ENCODE measurements at regions of chr15 and their contacts with region 1.

Region 1: DNA sequence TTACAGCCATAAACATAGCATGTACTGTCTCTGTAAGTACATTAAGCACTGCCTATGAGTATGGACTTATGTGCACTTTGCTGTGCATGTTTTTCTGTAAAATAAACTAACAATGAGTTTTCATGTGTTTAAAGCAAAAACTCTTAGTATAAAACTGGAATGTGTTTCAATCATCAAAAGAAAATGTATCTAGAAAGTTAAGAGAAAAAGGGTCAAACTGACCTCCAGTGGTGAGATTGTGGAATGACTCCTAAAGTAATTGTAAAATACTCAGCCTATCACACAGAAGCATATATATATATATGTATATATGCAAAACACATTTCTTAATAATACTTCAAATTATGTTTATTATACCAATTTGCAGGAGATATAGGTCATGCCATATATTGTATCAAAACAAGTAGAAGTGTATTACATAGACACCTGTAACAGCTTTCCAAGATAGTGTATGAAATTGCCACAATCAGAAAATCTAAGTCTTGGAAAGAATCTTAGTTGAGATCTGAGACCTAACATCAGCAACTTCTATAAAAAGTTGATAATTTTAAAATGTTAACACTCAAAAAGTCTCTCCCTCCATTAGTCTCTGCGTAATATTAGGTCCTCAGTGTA is 199.6 kb downstream of the FMN1 start:
- DNase-seq: peak; percentile 70
- H3K4me3 ChIP-seq: no peak overlapping the region
- H3K27ac ChIP-seq: peak overlapping the region; percentile 26; the same call in 1 of the 2 replicates
- H3K4me1 ChIP-seq: peaks cover 13% of the 10 kb centered on the region
- H3K27me3 ChIP-seq: no peaks in the 10 kb centered on the region

Region 2: GRCh38 chr15:32651229-32651837 is 343.6 kb before region 1 on chr15:
- in situ Hi-C with region 1: loop called (anchors 5 kb)
- DNase-seq: peak; percentile 86
- H3K4me3 ChIP-seq: no peak overlapping the region
- H3K27ac ChIP-seq: no peak overlapping the region
- H3K4me1 ChIP-seq: no peaks in the 10 kb centered on the region
- H3K27me3 ChIP-seq: no peaks in the 10 kb centered on the region

Region 3: DNA sequence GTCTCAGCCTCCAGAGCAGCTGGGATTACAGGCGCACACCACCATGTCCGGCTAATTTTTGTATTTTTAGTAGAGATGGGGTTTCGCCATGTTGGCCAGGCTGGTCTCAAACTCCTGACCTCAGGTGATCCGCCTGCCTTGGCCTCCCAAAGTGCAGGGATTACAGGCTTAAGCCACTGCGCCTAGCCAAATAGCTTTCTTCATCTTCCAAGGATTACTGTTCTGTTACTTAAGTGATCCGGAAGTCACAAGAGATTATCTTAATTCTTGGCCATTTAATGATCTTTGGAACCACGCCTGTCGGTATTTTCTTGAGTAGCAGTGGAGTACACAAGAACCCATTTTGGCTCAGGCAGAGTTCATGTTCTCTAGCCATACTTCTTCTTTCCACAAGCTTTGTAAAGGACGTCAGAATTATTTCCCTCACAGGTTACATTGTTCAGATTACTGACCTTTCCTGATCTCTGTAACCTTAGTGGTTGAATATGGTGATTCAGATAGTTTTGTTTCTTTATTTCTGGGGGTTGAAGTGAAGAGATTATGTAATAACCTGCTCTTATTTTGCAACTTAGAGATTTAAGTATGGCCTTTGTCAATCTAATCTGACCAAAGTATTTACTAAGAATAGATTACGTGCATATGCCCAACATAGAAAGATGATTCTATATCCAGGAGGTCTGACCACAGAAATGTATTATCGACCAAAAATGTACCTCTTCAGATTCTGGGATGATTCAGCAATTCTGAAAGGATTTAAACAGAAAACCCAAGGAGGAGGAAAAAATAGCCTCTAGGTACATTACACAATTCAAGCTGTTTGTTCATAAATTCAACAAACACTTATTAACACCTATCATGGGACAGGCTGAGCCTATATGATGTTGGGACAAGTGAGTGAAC is 144.9 kb before region 1 on chr15:
- in situ Hi-C with region 1: loop called (anchors 5 kb)
- DNase-seq: peak; percentile 89
- H3K4me3 ChIP-seq: no peak overlapping the region
- H3K27ac ChIP-seq: peak overlapping the region; percentile 91
- H3K4me1 ChIP-seq: peaks cover 38% of the 10 kb centered on the region
- H3K27me3 ChIP-seq: no peaks in the 10 kb centered on the region

Region 4: DNA sequence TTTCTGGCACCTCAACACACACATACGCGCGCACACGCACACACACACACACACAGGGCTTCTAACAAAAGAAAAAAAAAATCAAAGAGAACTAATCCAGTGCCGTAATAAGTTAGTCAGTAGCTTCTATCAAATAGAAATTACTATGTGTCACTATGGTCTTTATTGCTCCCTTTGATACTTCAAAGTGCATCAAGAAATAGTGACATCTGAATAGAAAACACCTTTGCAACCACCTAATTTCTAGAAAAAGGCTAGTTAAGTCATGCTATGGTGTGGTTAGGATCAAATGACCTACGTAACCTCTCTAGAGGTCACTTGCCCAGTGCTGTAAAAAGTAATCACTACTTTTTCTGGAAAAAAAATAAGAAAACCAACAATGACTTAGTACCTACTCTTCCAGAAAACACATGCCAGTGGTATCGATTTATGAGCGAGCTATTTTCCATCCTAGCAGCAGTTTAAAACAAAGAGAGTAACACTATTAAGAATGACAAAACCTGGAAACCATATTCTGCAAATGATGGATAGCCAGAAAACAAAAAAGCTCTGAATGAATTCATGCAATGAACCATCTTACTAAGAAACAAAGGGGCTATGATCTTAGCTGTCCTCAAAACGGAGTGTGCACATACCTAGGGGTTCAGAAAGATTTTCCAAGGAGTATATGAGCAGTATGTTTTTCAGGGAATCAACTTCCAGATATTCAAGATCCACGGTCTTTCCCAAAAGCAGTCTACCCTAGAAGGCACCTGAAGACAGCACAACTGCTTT is 1037.3 kb after region 1 on chr15:
- in situ Hi-C with region 1: no loop called
- DNase-seq: no peak
- H3K4me3 ChIP-seq: no peak overlapping the region
- H3K27ac ChIP-seq: no peak overlapping the region
- H3K4me1 ChIP-seq: 0 out of 2 replicates have a peak, but pooled peaks cover 17% of the 10 kb centered on the region
- H3K27me3 ChIP-seq: no peaks in the 10 kb centered on the region